ENCODE measurements at regions of chr22 and their contacts with region 1.

Region 1: DNA sequence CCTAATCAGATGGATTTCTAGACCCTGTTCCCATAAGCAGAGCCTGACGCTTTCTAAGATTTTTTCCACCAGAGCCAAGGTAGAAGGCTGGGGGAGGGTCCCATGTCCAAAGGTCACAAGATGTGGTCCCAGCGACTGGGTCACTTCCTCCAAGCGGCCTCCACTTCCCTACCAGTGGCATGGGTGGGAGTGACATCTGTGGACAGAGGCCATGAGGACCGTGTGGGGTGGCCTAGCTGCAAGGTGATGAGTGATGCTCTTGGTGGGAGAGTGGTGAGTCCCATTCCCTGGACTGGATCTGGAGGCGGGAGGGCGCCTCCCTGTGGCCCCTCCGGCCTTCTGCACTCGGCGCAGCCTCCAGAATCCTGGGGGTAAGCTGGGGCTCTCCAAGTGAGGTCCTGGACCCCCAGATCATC is 32.4 kb upstream of the PRR5 start:
- DNase-seq: no peak
- ATAC-seq: no peak
- H3K4me3 ChIP-seq: peak overlapping the region; percentile 54
- H3K4me3 Mint-ChIP-seq: peak overlapping the region; percentile 42 to 86 (median 78)
- H3K27ac ChIP-seq: peak overlapping the region; percentile 50
- H3K27ac Mint-ChIP-seq: peak overlapping the region in 6 of 9 donors; percentile 21 to 83 (median 44)
- H3K4me1 ChIP-seq: peaks cover 37 to 46% of the 10 kb centered on the region in 2 donors
- H3K4me1 Mint-ChIP-seq: peaks cover 28 to 61% (median 49%) of the 10 kb centered on the region in 7 donors
- H3K27me3 ChIP-seq: no peaks in the 10 kb centered on the region
- H3K27me3 Mint-ChIP-seq: peaks cover 0 to 19% (median 0%) of the 10 kb centered on the region in 5 donors

Region 2: GRCh38 chr22:44133901-44134571 is 535.5 kb before region 1 on chr22:
- CTCF ChIA-PET with region 1: no interaction called
- POLR2A ChIA-PET with region 1: no interaction called
- intact Hi-C with region 1: no loop called
- DNase-seq: no peak
- ATAC-seq: no peak
- H3K4me3 ChIP-seq: no peak overlapping the region
- H3K4me3 Mint-ChIP-seq: no peak overlapping the region
- H3K27ac ChIP-seq: no peak overlapping the region
- H3K27ac Mint-ChIP-seq: peak overlapping the region in 1 of 9 donors; percentile 61
- H3K4me1 ChIP-seq: no peaks in the 10 kb centered on the region
- H3K4me1 Mint-ChIP-seq: peaks cover 0 to 29% (median 0%) of the 10 kb centered on the region in 7 donors
- H3K27me3 ChIP-seq: no peaks in the 10 kb centered on the region
- H3K27me3 Mint-ChIP-seq: peaks cover 0 to 36% (median 11%) of the 10 kb centered on the region in 5 donors

Region 3: GRCh38 chr22:44620129-44620840 is 49.3 kb before region 1 on chr22:
- CTCF ChIA-PET with region 1: interaction called, 3 read pairs
- POLR2A ChIA-PET with region 1: no interaction called
- intact Hi-C with region 1: loop called in 1 of 2 experiments (anchors 2 kb)
- DNase-seq: peak; percentile 68 to 90 (median 83)
- ATAC-seq: peak; percentile 88
- H3K4me3 ChIP-seq: no peak overlapping the region
- H3K4me3 Mint-ChIP-seq: no peak overlapping the region
- H3K27ac ChIP-seq: peak overlapping the region; percentile 44
- H3K27ac Mint-ChIP-seq: peak overlapping the region in 2 of 9 donors; percentile 87 to 97
- H3K4me1 ChIP-seq: peaks cover 6 to 12% of the 10 kb centered on the region in 2 donors
- H3K4me1 Mint-ChIP-seq: peaks cover 0 to 10% (median 6%) of the 10 kb centered on the region in 7 donors
- H3K27me3 ChIP-seq: no peaks in the 10 kb centered on the region
- H3K27me3 Mint-ChIP-seq: peaks cover 0 to 4% (median 0%) of the 10 kb centered on the region in 5 donors

Region 4: DNA sequence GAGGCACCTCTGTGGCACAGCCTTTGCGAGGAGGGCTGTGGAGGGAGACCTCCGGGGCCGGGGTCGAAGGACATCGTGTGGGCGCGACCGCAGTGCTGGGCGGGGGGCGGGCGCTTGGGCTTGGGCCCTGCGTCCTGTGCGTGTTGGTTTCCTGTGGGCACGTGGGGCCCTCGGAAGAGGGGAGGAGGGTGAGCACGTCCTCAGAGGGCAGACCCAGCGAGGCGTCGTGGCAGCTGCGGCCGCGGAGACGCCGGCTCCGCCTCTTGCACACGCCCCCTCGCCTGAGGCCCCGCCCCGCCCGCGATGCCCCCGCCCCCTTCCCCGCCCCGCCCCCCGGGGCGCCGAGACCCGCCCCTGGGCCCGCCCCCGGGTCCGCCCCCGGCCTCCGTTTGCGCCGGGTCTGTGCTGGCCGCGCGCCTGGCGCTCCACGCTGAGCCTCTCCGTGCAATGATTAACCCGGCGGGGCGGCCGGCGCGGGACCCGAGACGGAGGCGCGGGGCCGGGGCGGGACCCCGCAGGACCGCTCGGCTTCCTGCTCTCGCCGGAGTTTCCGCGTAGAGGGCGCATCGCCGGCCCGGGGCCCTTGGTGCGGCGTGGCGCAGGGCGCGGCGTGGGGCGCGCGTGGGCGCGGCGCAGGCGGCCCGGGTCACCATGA is 32.4 kb after region 1 on chr22 and contains the start of gene PRR5:
- CTCF ChIA-PET with region 1: no interaction called
- POLR2A ChIA-PET with region 1: no interaction called
- intact Hi-C with region 1: loop called in 1 of 2 experiments (anchors 1 kb)
- DNase-seq: peak; percentile 73 to 85 (median 81)
- ATAC-seq: peak; percentile 94
- H3K4me3 ChIP-seq: peak within 1 kb of the TSS; percentile 64
- H3K4me3 Mint-ChIP-seq: peak within 1 kb of the TSS; percentile 72 to 83 (median 78)
- H3K27ac ChIP-seq: peak within 1 kb of the TSS; percentile 68
- H3K27ac Mint-ChIP-seq: peak within 1 kb of the TSS; percentile 74 to 91 (median 83)
- H3K4me1 ChIP-seq: peaks cover 21 to 23% of the 10 kb centered on the region in 2 donors
- H3K4me1 Mint-ChIP-seq: peaks cover 5 to 31% (median 17%) of the 10 kb centered on the region in 7 donors
- H3K27me3 ChIP-seq: no peaks in the 10 kb centered on the region
- H3K27me3 Mint-ChIP-seq: peaks cover 0 to 9% (median 0%) of the 10 kb centered on the region in 5 donors
- total RNA-seq, gene PRR5: 19.6 to 49.1 (median 44.4) TPM